Ascending aorta (tissue), 2 donors: ENCODE measurements at regions of chr16 and their contacts with region 1.

Region 1: DNA sequence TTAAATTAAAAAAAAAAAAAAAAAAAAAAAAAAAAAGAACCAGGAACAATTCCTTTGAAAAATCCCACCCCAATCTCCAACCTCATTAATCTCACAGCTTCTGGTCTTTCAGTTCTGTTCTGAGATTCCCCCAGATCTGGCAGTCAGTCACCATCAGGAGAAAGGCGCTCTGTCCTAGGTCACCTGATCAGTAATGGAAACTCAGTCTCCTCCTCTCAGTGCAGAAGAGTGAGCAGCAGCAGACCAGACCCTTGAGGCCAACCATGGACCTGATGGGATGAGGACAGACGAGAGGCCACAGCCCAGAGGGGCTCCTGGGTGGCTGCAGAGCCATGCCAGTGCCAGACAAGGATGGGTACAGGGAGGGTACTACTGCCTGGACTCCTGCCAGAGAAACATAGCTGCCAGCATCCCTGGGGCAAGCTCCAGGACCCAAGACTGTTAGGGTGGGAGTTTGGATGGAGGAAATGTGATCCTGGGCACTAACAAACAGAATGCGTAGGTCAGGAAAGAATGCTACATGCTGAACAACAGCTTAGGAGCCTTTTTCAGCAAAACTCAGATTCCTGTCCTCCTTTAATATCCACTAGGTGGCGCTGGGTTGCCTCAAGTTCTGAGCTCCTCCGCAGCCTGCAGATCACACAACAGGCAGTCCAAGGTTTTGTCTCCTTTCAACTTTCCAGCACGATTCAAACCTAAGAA is 28.7 kb downstream of the MPG start:
- DNase-seq: peak in 1 of 2 donors; percentile 79
- H3K4me3 ChIP-seq: no peak overlapping the region
- H3K27ac ChIP-seq: peak overlapping the region; percentile 37 to 54
- H3K4me1 ChIP-seq: peaks cover 9 to 19% of the 10 kb centered on the region in 2 donors
- H3K27me3 ChIP-seq: no peaks in the 10 kb centered on the region
- CTCF ChIP-seq: peak; percentile 67 to 83 (median 70)

Region 2: DNA sequence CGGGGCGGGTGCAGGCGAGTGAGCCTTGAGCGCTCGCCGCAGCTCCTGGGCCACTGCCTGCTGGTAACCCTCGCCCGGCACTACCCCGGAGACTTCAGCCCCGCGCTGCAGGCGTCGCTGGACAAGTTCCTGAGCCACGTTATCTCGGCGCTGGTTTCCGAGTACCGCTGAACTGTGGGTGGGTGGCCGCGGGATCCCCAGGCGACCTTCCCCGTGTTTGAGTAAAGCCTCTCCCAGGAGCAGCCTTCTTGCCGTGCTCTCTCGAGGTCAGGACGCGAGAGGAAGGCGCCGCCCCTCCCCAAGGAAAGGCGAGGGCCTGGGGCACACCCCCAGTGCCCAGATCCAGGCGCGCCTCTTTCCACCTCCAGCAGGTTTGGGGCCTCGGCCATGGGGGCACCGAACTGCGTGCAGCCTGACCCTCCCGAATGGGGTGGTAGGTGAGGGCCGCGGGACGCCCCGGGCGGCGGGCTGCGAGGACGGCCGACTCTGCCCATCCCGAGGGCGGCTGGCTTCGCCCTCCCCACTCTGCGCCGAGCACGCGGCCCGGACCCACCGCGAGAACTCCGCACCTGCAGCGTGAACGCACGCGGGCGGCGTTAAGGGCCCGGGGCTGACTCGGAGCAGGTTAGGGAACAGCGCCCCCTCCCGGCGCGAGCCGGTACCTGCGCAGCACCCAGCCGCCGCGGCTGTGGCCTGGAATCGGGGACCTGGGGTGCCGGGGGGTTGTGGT is 74.3 kb after region 1 on chr16:
- intact Hi-C with region 1: loop called (anchors 1 kb)
- DNase-seq: peak in 1 of 2 donors; percentile 82
- H3K4me3 ChIP-seq: peak overlapping the region; percentile 46 to 49
- H3K27ac ChIP-seq: no peak overlapping the region
- H3K4me1 ChIP-seq: peaks cover 9 to 10% of the 10 kb centered on the region in 2 donors
- H3K27me3 ChIP-seq: peaks cover 9% of the 10 kb centered on the region
- CTCF ChIP-seq: peak; percentile 90 to 97 (median 95)